ENCODE measurements at regions of chr2 and their contacts with region 1.

Region 1: DNA sequence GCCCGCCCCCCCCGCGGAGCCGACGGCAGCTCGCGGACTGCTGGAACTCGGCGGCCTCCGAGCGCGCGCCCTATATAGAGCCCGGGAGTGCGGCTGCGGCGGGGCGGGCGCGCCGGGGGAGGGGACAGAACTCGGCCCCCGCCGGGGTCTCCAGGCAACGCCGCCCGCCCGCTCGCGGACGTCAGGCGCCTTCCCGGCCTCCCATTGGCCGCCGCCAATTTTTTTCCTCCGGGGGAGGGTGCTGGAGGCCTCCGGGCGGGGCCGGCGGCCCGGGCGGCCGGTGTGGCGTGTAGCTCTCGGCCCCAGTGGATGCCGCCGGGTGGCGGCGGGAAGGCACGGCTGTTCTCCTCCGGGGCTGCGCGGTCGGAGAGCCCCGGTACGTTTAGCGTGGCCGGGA is at the start of gene ZFP36L2:
- DNase-seq: peak; percentile 98
- ATAC-seq: peak; percentile 81
- total RNA-seq, gene ZFP36L2: 45.0 TPM

Region 2: GRCh38 chr2:42828487-42829425 is 397.8 kb before region 1 on chr2:
- intact Hi-C with region 1: loop called (anchors 5 kb)
- DNase-seq: peak; percentile 87
- ATAC-seq: peak; percentile 95

Region 3: DNA sequence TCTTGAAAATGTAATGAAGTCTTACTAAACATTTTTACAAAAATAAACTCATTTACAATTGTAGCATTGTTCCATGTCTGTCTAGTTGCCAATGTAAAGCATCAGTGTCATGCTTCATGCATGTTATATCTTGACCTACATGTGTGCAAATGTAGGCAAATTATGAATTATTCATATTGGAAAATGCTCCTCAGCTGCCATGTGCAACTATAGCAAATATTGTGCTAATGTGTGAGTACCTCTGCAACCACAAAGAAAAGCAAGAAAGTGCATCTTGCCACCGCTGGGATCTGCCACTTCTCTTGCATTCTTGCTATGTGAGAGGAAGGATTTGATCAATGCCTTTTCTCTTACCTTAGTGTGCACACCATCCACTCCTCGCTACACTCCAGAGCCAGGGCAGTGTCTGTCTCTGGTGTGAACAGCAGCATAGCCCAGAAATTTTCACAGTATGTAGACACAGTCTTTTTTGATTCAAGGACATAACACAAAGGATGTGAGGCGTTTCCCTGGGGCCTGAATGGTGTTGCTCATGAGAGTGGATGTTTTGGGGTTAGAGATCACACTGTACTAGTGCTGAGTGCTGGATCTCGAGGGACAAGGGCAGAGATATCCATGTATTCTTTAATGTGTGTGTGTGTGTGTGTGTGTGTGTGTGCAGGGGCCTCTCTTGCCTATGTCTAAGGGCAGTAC is 386.6 kb before region 1 on chr2:
- intact Hi-C with region 1: no loop called
- DNase-seq: no peak
- ATAC-seq: peak; percentile 52

Region 4: DNA sequence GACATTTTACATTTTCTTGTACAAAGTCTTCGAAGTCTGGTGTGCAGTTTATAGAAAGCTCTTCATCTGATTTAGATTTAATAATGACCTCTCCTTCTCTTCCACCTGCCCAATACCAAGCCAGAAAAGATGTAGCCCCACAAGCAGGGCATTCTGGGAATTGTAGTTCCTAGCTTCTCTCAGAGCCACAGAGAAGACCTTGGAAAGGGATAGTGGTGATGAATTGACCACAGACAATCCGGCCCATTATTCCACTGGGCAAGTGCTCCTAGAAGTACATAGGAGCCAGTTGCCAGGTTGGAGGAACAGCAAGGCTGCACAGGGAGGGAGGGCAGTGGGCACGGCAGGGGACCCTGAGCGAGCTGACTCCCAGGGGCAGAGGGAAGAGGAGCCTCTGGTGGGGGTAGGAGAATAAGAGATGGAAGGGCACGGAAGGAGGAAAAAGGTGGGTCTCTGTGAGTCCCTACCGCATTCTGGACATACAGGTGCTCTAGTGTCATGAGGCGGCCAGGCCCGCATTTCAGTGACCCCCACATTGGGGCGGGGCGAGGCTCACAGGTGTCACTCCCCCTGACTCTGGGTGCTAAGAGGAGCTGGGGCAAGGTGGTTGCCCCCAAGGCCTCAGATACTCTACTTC is 281.7 kb before region 1 on chr2:
- intact Hi-C with region 1: loop called (anchors 2 kb)
- DNase-seq: no peak
- ATAC-seq: no peak

Region 5: GRCh38 chr2:42974721-42975717 is 251.5 kb before region 1 on chr2:
- intact Hi-C with region 1: loop called (anchors 2 kb)
- DNase-seq: peak; percentile 89
- ATAC-seq: peak; percentile 92

Region 6: DNA sequence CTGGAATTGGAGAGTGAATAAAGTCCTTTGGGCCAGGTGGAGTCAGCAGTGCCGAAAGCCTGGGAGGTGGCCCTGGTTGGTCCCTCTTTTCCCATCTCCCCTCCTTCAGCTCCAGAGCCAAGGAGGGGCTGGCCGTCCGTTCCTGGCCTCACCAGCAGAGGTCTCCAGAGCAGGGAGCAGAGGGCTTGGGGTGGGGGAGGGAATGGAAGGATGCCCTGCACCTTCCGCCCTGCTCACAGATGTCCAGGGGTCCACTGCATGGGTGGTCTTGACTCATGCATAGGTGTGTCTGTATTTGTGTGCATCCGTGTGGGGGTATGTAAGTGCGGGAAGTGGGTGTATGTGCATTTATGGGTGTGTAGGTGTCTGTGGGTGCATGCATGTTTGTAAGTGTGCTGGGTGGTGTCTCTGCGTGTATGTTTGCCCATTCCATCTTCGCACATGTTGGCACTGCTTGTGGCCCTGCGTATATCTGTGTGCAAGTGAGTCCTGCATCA is 202.0 kb before region 1 on chr2:
- intact Hi-C with region 1: loop called (anchors 2 kb)
- DNase-seq: peak; percentile 74
- ATAC-seq: peak; percentile 76

Region 7: DNA sequence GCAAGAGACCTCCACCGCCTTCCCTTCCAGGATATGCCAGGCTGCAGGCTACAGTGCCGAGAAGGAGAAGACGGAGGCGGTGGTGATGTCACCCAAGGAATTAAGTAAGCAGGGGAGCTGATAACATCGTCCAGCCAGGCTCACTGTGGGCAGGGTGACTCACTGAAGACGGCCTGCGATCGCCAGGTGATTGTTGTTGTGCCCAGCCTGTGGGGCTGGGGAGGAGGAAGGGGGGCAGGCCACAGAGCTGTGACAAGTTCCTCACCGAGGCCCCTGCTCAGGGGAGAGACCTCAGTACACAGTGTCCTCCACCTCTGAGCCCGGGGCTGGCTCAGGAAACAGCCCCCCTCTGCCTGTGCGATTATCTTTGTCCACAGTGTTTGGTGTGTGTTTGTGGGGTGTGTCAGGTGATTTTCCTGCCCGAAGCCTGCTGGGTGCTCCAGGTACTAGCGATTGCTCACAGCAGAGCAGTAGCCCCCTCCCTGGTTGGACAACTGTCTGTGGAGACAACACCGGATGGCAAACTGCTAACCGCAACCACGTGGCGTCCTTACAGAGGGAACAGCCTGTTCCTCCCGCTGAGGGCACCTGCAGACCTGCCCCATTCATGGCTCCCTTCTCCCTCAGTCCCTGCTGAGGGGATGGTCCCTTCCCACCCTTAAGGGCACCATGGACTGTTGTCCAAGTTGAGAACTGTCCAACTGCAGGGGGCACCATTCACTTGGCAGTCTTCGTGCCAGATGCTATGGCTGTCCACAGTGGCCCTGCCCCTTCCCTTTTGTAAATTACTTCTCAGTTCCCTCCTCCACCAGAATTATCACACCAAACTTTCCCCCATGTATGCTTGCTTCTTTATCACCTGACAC is 95.3 kb before region 1 on chr2:
- intact Hi-C with region 1: loop called (anchors 5 kb)
- DNase-seq: peak; percentile 82
- ATAC-seq: peak; percentile 45

Region 8: GRCh38 chr2:43288417-43289305 is 62.1 kb after region 1 on chr2:
- intact Hi-C with region 1: no loop called
- DNase-seq: no peak
- ATAC-seq: no peak

Measured in Right ventricle myocardium superior (tissue), 1 donor.